Left cardiac atrium (tissue), 4 donors: ENCODE measurements at regions of chr6 and their contacts with region 1.

Region 1: DNA sequence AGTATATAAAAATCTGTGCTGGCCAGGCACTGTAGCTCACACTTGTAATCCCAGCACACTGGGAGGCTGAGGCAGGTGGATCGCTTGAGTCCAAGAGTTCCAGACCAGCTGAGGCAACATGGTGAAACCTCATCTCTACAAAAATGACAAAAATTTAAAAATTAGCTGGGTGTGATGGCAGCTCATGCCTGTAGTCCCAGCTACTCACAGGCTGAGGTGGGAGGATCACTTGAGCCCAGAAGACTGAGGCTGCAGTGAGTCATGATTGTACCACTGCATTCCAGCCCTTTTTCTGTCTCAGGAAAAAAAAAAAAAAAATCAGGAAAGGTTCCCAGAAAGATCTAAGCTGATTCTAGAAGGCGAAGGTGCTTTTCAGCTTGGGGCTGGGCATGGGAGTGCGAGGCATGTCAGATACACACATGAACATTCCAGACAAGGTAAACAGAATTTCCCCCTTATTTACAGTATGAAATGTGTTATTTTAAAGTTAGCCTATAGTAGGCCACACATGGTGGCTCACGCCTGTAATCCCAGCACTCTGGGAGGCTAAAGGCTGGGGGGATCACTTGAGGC is 5.7 kb downstream of the RMND1 start:
- DNase-seq: peak; percentile 33
- ATAC-seq: peak; percentile 32 to 90

Region 2: DNA sequence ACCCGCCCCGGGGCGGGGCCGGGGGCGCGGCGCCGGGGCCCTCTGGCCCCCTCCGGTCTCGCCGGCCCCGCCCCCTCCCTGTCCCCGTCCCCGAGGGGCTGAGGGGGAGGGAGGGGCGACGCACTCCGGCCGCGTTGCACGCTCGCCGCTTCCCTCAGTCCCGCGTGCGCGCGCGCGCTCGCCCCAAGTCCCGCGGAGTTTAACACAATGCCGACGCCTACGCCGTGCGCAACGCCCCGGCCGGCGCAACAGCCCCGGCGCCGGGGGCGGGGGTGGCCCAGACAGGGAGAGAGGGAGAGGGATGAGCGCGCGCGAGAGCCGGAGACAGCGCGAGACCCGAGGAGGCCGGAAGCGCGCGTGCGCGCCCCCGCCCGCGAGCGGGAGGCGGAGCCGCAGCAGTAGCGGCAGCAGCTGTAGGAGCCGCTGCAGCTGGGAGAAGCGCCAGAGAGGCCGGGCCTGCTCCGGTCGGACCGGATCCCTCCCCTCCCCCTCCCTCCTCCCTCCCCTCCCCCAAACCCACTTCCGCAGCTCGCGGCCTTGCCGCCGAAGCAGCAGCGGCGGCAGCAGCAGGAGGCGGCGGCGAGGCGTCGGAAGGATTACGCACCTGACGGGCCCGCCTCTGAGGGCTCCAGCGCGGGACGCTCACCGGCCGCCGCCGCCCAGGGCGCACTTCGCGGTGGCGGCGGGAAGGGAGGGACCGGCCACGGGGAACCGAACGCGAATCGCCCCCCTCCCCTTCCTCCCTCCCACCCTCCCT is 55.8 kb before region 1 on chr6:
- intact Hi-C with region 1: loop called in 1 of 2 experiments (anchors 5 kb)
- DNase-seq: peak; percentile 98
- ATAC-seq: peak; percentile 92